Activated T-helper 2 cell treated with anti-CD3 and anti-CD28 coated beads, Interferon-gamma antibody, Interleukin-2, Interleukin-4, amounts not matched to agents 10 μg/mL and 5 μg/mL and 100 μg/mL, durations not matched to agents 14 hours and 24 hours and 36 hours (primary cell): ENCODE measurements at regions of chr11 and their contacts with region 1.

Region 1: DNA sequence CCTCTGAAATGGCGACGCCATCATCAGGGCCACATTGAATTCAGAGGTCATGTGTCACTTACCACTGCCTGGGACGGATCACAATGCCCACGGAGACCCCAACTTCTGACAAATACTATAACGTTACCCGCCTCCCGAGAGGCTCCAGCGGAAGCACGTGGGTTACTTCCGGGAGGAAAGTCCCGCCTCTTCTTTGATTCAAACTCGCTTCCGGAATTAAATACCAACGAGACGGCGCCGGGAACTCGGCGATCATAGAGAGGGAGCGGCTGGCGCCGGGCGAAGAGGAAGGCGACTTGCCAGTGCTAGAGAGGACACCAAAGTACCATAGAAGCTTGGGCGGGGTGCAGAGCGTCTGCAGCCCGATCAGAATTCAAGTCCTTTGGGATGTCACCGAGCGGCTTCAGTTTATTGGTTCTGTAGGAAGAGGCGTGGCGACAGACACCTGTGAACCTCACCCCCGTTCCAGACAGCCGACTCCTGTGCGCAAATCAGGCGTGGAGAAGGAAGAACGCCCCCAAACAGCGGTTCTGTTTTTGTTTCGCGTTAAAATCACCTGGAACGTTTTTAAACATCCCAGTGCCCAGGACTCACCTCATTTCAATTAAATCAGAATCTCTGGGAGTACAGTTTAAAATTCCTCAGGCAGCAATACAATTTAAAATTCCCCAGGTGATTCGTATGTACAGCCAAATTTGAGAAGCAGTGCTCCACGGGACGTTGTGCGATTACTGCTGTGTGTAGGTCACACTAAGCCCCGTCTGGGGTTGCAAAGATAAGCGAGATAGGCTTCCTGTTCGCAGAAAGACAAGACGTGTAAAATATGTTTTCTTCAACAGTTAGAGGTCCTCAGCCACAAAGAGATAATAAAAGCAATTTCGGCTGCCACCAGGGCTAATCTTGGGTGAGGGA is at the start of gene TIMM10:
- DNase-seq: peak; percentile 93
- H3K4me3 Mint-ChIP-seq: peak within 1 kb of the TSS; percentile 91
- H3K27ac Mint-ChIP-seq: peak within 1 kb of the TSS; percentile 93
- H3K4me1 Mint-ChIP-seq: peaks cover 27% of the 10 kb centered on the region
- H3K27me3 Mint-ChIP-seq: no peaks in the 10 kb centered on the region
- total RNA-seq, gene TIMM10: 76.9 and 90.0 TPM in 2 replicates

Region 2: GRCh38 chr11:57335343-57336110 is 195.3 kb before region 1 on chr11 and contains the start of gene SSRP1:
- intact Hi-C with region 1: loop called (anchors 2 kb)
- DNase-seq: peak; percentile 81
- H3K4me3 Mint-ChIP-seq: peak within 1 kb of the TSS; percentile 92
- H3K27ac Mint-ChIP-seq: peak within 1 kb of the TSS; percentile 95
- H3K4me1 Mint-ChIP-seq: peaks cover 29% of the 10 kb centered on the region
- H3K27me3 Mint-ChIP-seq: peaks cover 10% of the 10 kb centered on the region
- total RNA-seq, gene SSRP1: 214 and 218 TPM in 2 replicates

Region 3: DNA sequence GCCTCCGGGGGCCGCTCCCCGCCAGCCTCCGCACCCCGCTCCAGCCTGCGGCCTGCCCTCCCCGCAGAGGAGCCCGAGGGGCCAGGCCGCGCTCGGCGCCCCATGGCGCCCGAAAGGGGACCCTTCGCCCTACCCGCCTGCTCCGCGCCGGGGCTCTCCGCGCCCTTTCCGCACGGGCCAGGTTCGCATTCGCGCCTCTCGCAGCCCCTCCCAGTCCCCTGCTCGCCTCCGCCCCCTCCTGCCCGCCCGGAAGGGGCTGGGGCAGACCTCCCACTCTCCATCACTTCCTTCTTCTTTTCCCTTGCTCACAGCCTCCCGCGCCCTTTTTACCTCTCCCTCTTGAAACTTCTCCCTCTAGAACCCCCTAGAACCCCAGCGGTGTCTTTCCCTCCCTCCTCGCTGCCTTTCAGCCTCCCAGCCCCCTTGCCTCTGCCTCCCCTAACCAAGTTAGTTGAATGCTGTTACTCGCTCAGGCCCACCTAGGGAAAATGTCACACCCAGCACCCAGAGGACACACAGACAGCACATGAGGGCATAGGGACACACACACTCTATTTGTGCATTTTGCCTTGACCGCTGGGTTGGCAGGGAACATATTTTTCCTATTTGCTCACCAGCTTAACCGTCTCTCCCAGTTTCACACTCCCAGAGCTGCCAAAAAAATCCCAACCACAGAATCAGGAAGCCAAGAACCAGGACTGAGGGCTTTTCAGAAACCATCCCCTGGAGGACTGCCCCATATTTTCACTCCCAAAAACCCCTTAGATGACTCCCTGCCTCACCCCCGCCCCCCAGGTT is 103.7 kb before region 1 on chr11 and contains the start of gene SLC43A3:
- intact Hi-C with region 1: loop called (anchors 1 kb)
- DNase-seq: peak; percentile 66
- H3K4me3 Mint-ChIP-seq: peak within 1 kb of the TSS; percentile 91
- H3K27ac Mint-ChIP-seq: peak within 1 kb of the TSS; percentile 64
- H3K4me1 Mint-ChIP-seq: peaks cover 44% of the 10 kb centered on the region
- H3K27me3 Mint-ChIP-seq: peaks cover 3% of the 10 kb centered on the region
- total RNA-seq, gene SLC43A3: 174 and 189 TPM in 2 replicates

Region 4: GRCh38 chr11:57491371-57492061 is 39.3 kb before region 1 on chr11:
- intact Hi-C with region 1: loop called (anchors 1 kb)
- DNase-seq: peak; percentile 44
- H3K4me3 Mint-ChIP-seq: no peak overlapping the region
- H3K27ac Mint-ChIP-seq: no peak overlapping the region
- H3K4me1 Mint-ChIP-seq: peaks cover 1% of the 10 kb centered on the region
- H3K27me3 Mint-ChIP-seq: no peaks in the 10 kb centered on the region

Region 5: DNA sequence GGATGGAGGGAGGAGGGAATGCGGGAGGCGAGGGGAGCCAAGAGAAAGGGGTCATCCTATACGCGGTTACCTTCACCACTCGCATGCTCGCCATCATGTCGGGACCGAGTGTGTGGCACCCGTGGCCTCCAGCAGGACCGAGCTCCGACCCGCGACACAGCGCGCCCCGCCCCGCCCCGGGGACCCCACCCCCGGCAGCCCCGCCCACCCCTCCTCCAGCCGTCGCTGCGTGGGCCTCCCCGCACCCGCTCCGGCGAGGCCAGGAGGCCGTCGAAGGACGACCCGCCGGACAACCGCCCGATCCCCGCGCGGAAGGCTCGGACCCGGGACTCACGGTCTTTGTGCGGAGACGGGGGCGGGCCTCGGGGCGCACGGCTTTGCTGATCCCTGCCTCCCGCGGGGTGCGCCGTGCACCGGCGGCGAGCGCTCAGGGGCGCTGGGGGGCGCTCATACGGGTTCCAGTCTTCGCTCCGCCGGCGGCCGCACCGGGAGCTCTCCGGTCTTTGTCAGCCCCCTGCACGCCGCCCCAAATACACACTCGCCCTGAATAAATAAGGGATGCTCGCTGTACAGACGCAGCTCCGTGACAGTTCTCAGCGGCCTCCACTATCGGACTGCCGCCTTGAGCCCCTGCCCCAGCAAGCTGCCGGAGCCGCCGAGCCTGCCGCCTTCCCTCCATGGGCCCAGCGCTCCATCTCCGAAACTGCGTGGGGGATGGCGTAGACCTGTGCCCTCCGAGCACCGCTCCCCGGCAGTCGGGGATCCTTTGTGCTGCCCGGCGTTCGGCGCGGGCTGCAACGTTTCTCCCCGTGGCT is 36.9 kb after region 1 on chr11 and contains the start of gene UBE2L6:
- intact Hi-C with region 1: loop called (anchors 1 kb)
- DNase-seq: peak; percentile 56
- H3K4me3 Mint-ChIP-seq: peak within 1 kb of the TSS; percentile 99
- H3K27ac Mint-ChIP-seq: peak within 1 kb of the TSS; percentile 97
- H3K4me1 Mint-ChIP-seq: peaks cover 26% of the 10 kb centered on the region
- H3K27me3 Mint-ChIP-seq: no peaks in the 10 kb centered on the region
- total RNA-seq, gene UBE2L6: 135 and 137 TPM in 2 replicates

Region 6: DNA sequence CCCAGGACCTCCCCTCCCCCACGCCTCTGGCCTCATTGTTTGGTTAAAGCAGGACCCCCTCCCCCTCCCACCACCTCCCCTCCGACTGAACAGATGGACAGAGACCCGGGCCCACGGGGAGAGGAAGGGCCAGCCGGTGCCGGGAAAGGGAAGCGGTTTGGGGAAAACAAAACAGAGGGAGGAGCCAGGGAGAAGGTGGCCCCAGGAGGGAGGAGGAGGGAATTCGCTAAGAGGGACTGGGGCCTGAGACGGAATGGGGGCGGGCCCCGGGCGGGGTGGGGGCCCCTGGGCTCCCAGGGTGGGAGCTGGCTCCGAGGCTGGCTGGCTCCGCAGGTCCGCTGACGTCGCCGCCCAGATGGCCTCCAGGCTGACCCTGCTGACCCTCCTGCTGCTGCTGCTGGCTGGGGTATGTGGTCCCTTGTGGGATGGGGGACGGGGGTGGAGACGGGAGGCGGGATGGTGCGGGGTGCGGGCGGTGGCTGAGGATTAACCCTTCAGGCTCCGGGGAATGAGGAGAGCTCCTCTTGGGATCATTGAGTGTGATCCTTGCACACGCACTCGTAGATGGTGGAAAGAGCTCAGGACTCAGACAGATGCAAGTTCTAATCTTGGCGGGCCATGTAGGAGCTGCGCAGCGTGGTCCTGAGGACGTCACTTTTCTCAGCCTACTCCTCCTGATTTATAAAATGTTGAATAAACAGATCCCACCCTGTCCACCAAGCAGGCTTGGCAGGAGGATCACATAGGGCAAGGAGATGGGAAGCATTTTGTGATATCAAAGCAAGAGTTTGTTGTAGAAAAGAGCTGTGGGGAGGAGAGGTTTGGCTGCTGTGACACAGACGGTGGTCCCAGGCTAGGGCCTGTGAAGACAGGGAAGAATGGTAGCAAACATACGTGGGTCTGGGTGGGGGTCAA is 67.3 kb after region 1 on chr11:
- intact Hi-C with region 1: no loop called
- DNase-seq: no peak
- H3K4me3 Mint-ChIP-seq: no peak overlapping the region
- H3K27ac Mint-ChIP-seq: no peak overlapping the region
- H3K4me1 Mint-ChIP-seq: no peaks in the 10 kb centered on the region
- H3K27me3 Mint-ChIP-seq: peaks cover 40% of the 10 kb centered on the region

Region 7: DNA sequence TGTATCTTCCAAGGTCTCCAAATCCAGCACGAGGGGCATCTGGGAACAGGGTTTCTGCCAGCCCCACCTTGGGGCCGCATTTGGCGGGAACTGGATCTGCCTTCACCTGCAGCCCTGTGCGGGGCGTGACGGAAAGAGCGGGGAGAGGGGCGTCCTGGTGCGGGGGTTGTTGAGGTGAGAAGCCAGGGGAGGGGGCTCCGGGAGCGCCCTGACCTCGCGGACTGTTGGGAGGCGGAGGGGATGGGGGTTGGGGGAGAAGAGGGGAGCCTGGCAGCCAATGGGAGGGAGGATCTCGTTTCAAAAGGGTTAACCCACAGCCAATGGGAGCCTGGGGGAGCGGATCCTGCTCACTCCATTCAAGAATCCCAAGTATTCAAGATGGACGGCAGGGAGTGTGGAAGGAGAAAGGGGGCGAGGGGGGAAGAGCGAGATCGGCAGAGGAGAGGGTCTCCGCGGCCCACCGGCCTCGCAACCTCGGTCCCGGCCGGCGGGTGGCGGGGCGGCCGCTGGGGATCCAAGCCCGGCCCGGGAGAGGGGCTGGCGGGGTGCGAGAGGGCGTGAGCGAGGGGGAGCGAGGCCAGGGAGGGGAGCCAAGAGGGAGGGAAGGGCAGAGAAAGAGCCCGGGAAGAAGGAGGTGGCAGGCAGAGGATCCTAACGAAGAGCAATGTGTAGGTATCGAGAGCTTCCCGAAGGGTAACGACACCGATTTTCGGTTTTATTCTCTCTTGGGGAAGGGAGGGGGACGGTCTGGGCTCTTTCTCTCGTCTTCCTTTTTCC is 107.3 kb after region 1 on chr11:
- intact Hi-C with region 1: no loop called
- DNase-seq: no peak
- H3K4me3 Mint-ChIP-seq: peak overlapping the region; percentile 92
- H3K27ac Mint-ChIP-seq: peak overlapping the region; percentile 87
- H3K4me1 Mint-ChIP-seq: peaks cover 23% of the 10 kb centered on the region
- H3K27me3 Mint-ChIP-seq: peaks cover 26% of the 10 kb centered on the region

Region 8: GRCh38 chr11:57667736-57668435 is 137.0 kb after region 1 on chr11 and contains the start of gene ZDHHC5:
- intact Hi-C with region 1: loop called (anchors 2 kb)
- DNase-seq: peak; percentile 100
- H3K4me3 Mint-ChIP-seq: peak within 1 kb of the TSS; percentile 99
- H3K27ac Mint-ChIP-seq: peak within 1 kb of the TSS; percentile 99
- H3K4me1 Mint-ChIP-seq: peaks cover 29% of the 10 kb centered on the region
- H3K27me3 Mint-ChIP-seq: no peaks in the 10 kb centered on the region
- total RNA-seq, gene ZDHHC5: 64.7 and 69.9 TPM in 2 replicates

Region 9: GRCh38 chr11:57741132-57742086 is 210.6 kb after region 1 on chr11 and contains the start of gene SELENOH:
- intact Hi-C with region 1: loop called (anchors 1 kb)
- DNase-seq: peak; percentile 94
- H3K4me3 Mint-ChIP-seq: peak within 1 kb of the TSS; percentile 96
- H3K27ac Mint-ChIP-seq: peak within 1 kb of the TSS; percentile 90
- H3K4me1 Mint-ChIP-seq: peaks cover 17% of the 10 kb centered on the region
- H3K27me3 Mint-ChIP-seq: no peaks in the 10 kb centered on the region
- total RNA-seq, gene SELENOH: 179 and 183 TPM in 2 replicates

Region 10: GRCh38 chr11:58394195-58394594 is 863.3 kb after region 1 on chr11:
- intact Hi-C with region 1: no loop called
- DNase-seq: no peak
- H3K4me3 Mint-ChIP-seq: no peak overlapping the region
- H3K27ac Mint-ChIP-seq: no peak overlapping the region
- H3K4me1 Mint-ChIP-seq: peaks cover 2% of the 10 kb centered on the region
- H3K27me3 Mint-ChIP-seq: no peaks in the 10 kb centered on the region